ENCODE measurements at regions of chr7 and their contacts with region 1.

Region 1: GRCh38 chr7:154353355-154353767 is 301.2 kb downstream of the DPP6 start:
- DNase-seq: no peak
- H3K4me3 ChIP-seq: no peak overlapping the region
- H3K27ac ChIP-seq: no peak overlapping the region
- H3K4me1 ChIP-seq: no peaks in the 10 kb centered on the region
- H3K27me3 ChIP-seq: no peaks in the 10 kb centered on the region
- CTCF ChIP-seq: no peak
- POLR2A ChIP-seq: no peak

Region 2: DNA sequence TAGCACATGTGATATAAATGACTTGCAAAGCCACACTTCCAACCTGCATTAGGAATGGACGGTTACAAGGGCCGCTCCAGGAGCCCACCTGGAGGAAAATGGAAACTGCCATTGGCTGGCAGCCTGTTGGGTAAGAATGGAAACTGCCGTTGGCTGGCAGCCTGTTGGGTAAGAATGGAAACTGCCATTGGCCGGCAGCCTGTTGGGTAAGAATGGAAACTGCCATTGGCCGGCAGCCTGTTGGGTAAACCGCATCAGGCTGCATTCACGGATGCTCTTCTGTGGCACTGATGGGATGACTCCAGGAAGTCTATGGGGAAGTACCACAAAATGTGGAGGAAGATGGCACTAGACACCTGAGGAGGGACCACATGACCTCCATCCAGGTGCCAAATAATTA is 158.1 kb before region 1 on chr7:
- intact Hi-C with region 1: no loop called
- DNase-seq: no peak
- H3K4me3 ChIP-seq: no peak overlapping the region
- H3K27ac ChIP-seq: no peak overlapping the region
- H3K4me1 ChIP-seq: no peaks in the 10 kb centered on the region
- H3K27me3 ChIP-seq: no peaks in the 10 kb centered on the region
- CTCF ChIP-seq: no peak
- POLR2A ChIP-seq: no peak

Region 3: GRCh38 chr7:155178096-155178495 is 824.7 kb after region 1 on chr7:
- intact Hi-C with region 1: loop called (anchors 5 kb)
- DNase-seq: no peak
- H3K4me3 ChIP-seq: no peak overlapping the region
- H3K27ac ChIP-seq: no peak overlapping the region
- H3K4me1 ChIP-seq: no peaks in the 10 kb centered on the region
- H3K27me3 ChIP-seq: no peaks in the 10 kb centered on the region
- CTCF ChIP-seq: no peak
- POLR2A ChIP-seq: no peak